B cell (primary cell): ENCODE measurements at regions of chr1 and their contacts with region 1.

Region 1: GRCh38 chr1:19462781-19463503 is 22.4 kb downstream of the CAPZB start:
- DNase-seq: peak; percentile 80
- ATAC-seq: peak; percentile 83
- H3K4me3 ChIP-seq: peak overlapping the region in 4 of 5 experiments; percentile 16 to 29 (median 23)
- H3K4me3 Mint-ChIP-seq: peak overlapping the region; percentile 78
- H3K27ac ChIP-seq: peak overlapping the region; percentile 76 to 96
- H3K27ac Mint-ChIP-seq: peak overlapping the region; percentile 88
- H3K4me1 ChIP-seq: peaks cover 82 to 95% of the 10 kb centered on the region in 2 donors
- H3K4me1 Mint-ChIP-seq: peaks cover 85% of the 10 kb centered on the region
- H3K27me3 ChIP-seq: no peaks in the 10 kb centered on the region
- H3K27me3 Mint-ChIP-seq: no peaks in the 10 kb centered on the region
- CTCF ChIP-seq: no peak

Region 2: GRCh38 chr1:19448491-19449439 is 14.2 kb before region 1 on chr1:
- CTCF ChIA-PET with region 1: interaction called, 4 read pairs
- POLR2A ChIA-PET with region 1: interaction called, 4 read pairs
- intact Hi-C with region 1: loop called (anchors 2 kb)
- DNase-seq: no peak
- ATAC-seq: no peak
- H3K4me3 ChIP-seq: no peak overlapping the region
- H3K4me3 Mint-ChIP-seq: peak overlapping the region; percentile 27
- H3K27ac ChIP-seq: peak overlapping the region in 1 of 2 donors; percentile 64
- H3K27ac Mint-ChIP-seq: peak overlapping the region; percentile 79
- H3K4me1 ChIP-seq: peaks cover 47 to 78% of the 10 kb centered on the region in 2 donors
- H3K4me1 Mint-ChIP-seq: peaks cover 80% of the 10 kb centered on the region
- H3K27me3 ChIP-seq: no peaks in the 10 kb centered on the region
- H3K27me3 Mint-ChIP-seq: no peaks in the 10 kb centered on the region
- CTCF ChIP-seq: no peak

Region 3: DNA sequence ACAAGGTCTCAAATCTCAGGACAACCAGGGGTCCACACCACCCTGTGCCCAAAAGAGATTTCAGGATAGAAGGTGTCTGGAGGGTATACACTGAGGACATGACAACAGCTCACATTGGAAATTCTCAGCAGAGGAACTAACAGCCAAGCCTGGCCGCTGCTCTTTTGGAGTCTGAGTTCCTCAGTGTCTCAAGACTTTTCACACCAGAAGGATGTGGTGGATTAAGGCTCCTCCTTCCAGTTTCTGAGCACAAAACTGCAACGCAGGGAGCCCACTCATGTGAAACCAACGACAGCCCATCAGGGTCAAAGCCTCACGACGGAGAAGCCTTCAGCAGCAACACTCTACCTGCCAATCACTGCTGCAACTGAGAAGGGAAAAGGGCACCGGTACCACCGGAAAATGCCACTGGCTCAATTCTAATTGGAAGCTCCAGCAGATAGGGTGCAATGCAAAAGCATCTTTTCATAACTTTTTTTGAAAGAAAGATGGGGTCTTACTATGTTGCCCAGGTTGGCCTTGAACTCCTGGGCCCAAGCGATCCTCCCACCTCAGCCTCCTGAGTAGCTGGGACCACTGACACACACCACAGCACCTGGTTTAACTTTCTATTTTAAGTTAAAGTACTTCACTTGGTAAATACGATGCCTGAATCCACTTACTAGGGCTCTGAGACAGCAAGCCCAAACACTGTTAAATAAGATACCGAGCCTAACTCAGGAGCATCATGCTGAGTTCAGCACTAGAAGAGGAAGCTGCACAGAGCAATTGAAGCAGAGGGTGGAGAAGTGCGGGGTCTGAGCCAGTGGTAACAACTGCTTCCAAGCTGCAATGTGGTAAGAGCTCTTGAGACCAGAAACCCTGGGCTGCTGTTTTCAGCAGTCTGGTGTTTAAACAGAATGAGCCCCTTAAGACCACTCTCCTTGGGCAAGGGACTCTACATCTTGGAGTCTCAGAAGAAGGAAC is 14.6 kb after region 1 on chr1:
- CTCF ChIA-PET with region 1: interaction called, 11 read pairs
- POLR2A ChIA-PET with region 1: interaction called, 19 read pairs
- intact Hi-C with region 1: loop called (anchors 1 kb)
- DNase-seq: peak; percentile 79
- ATAC-seq: peak; percentile 73
- H3K4me3 ChIP-seq: peak overlapping the region; percentile 11 to 57 (median 53)
- H3K4me3 Mint-ChIP-seq: peak overlapping the region; percentile 75
- H3K27ac ChIP-seq: peak overlapping the region; percentile 78 to 95
- H3K27ac Mint-ChIP-seq: peak overlapping the region; percentile 94
- H3K4me1 ChIP-seq: peaks cover 77 to 93% of the 10 kb centered on the region in 2 donors
- H3K4me1 Mint-ChIP-seq: peaks cover 89% of the 10 kb centered on the region
- H3K27me3 ChIP-seq: no peaks in the 10 kb centered on the region
- H3K27me3 Mint-ChIP-seq: no peaks in the 10 kb centered on the region
- CTCF ChIP-seq: no peak